ENCODE measurements at regions of chr12 and their contacts with region 1.

Region 1: DNA sequence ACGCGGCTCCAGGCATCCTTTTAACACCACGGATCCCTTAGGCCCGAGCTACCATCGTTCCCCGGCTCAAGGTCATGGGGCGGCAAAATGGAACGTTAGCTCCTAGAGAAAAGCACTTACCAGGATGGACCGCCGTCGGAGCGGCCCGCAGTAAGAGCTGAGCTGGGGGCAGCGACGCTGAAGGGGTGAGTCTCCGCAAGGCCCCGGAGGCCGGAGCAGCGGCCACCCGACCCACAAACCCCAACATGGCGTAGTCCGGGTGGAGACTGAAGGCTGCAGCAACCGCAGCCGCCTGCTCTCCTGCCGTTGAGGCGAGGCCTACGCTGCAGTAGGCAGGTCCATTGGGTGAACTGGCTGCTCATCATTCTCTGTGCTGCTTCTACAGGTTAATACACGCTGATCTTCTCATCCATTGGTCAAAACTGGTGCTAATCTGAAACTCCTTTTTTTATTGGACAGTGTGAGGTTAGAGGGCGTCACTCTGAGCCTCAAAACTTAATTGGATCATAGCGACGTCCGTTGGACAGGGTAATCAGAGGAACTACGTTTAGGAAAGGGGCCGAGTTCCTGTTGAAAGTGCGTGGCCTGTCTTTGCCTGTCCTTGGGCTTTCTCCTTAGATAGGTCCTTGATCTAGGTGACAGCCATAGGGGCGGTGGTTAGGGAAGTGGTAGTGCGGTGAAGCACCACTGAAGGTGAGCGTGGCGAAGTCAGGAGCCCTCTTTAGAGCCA is at the start of gene ATP5F1B:
- DNase-seq: peak; percentile 74 to 99 (median 84)
- ATAC-seq: peak; percentile 95
- H3K4me3 ChIP-seq: peak within 1 kb of the TSS; percentile 83
- H3K4me3 Mint-ChIP-seq: peak within 1 kb of the TSS; percentile 85
- H3K27ac ChIP-seq: peak within 1 kb of the TSS; percentile 86 to 91
- H3K27ac Mint-ChIP-seq: peak within 1 kb of the TSS; percentile 88
- H3K4me1 ChIP-seq: peaks cover 36% of the 10 kb centered on the region
- H3K4me1 Mint-ChIP-seq: peaks cover 34% of the 10 kb centered on the region
- H3K27me3 ChIP-seq: no peaks in the 10 kb centered on the region
- H3K27me3 Mint-ChIP-seq: no peaks in the 10 kb centered on the region
- CTCF ChIP-seq: no peak
- total RNA-seq, gene ATP5F1B: 305 to 318 TPM

Region 2: GRCh38 chr12:56657416-56658379 is 11.8 kb after region 1 on chr12:
- CTCF ChIA-PET with region 1: interaction called, 3 read pairs
- POLR2A ChIA-PET with region 1: interaction called, 12 read pairs
- intact Hi-C with region 1: no loop called
- DNase-seq: no peak
- ATAC-seq: no peak
- H3K4me3 ChIP-seq: no peak overlapping the region
- H3K4me3 Mint-ChIP-seq: no peak overlapping the region
- H3K27ac ChIP-seq: no peak overlapping the region
- H3K27ac Mint-ChIP-seq: no peak overlapping the region
- H3K4me1 ChIP-seq: no peaks in the 10 kb centered on the region
- H3K4me1 Mint-ChIP-seq: no peaks in the 10 kb centered on the region
- H3K27me3 ChIP-seq: no peaks in the 10 kb centered on the region
- H3K27me3 Mint-ChIP-seq: no peaks in the 10 kb centered on the region
- CTCF ChIP-seq: no peak

Region 3: GRCh38 chr12:56716458-56716857 is 70.6 kb after region 1 on chr12:
- CTCF ChIA-PET with region 1: no interaction called
- POLR2A ChIA-PET with region 1: no interaction called
- intact Hi-C with region 1: no loop called
- DNase-seq: no peak
- ATAC-seq: no peak
- H3K4me3 ChIP-seq: no peak overlapping the region
- H3K4me3 Mint-ChIP-seq: no peak overlapping the region
- H3K27ac ChIP-seq: peak overlapping the region in 1 of 2 donors; percentile 29
- H3K27ac Mint-ChIP-seq: peak overlapping the region; percentile 74
- H3K4me1 ChIP-seq: peaks cover 53% of the 10 kb centered on the region
- H3K4me1 Mint-ChIP-seq: peaks cover 55% of the 10 kb centered on the region
- H3K27me3 ChIP-seq: no peaks in the 10 kb centered on the region
- H3K27me3 Mint-ChIP-seq: no peaks in the 10 kb centered on the region
- CTCF ChIP-seq: no peak